Cardiac septum (tissue), 1 donor: ENCODE measurements at regions of chr9 and their contacts with region 1.

Region 1: DNA sequence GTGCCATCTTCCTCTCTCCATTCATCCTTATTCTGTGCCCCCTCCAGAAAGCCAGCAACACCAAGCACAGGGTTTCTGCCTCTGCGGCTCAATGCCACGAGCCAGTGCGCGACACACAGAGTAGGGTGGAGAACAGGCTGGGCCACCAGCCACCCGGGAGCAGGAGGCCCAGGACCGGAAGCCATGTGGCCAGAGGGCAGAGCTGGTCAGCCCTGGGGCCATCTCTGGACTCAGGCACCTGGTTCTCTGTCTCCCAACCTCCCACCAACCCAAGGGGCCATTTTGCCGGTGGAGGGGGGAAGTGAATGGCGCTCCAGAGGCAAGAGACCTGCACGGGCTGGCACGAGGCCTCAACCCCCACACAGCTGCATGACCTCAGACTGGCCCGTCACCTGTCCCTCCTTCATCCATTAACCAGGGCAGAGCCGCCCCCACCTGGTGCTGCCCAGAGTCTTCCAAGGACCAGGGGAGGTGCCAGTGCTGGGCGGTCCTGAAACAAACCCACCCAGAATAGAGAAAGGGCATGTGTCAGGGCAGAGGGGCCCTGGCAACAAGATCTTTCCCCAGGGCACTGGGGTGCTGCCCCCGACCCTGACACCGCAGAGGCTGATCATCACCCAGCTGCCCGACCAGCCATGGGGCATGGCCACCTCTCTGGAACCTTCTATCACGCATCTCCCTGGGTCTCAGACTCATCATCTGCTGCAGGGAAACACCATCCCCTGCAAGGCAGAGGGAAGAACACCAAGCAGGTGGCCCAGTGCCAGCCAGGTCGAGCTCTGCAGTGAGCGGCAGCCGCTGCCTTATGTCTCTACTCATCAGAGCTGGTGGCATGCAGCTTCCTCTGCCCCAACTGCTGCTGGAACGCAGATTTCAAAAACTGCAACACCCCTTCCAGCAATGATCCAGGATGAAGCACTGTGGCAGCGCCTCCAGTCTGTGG is 11.9 kb downstream of the VAV2 start:
- DNase-seq: no peak

Region 2: GRCh38 chr9:133928248-133928764 is 51.9 kb before region 1 on chr9:
- intact Hi-C with region 1: loop called (anchors 5 kb)
- DNase-seq: no peak

Region 3: GRCh38 chr9:134814598-134815220 is 834.5 kb after region 1 on chr9:
- intact Hi-C with region 1: no loop called
- DNase-seq: no peak